Mucosa of descending colon (tissue), 3 donors: ENCODE measurements at regions of chr20 and their contacts with region 1.

Region 1: DNA sequence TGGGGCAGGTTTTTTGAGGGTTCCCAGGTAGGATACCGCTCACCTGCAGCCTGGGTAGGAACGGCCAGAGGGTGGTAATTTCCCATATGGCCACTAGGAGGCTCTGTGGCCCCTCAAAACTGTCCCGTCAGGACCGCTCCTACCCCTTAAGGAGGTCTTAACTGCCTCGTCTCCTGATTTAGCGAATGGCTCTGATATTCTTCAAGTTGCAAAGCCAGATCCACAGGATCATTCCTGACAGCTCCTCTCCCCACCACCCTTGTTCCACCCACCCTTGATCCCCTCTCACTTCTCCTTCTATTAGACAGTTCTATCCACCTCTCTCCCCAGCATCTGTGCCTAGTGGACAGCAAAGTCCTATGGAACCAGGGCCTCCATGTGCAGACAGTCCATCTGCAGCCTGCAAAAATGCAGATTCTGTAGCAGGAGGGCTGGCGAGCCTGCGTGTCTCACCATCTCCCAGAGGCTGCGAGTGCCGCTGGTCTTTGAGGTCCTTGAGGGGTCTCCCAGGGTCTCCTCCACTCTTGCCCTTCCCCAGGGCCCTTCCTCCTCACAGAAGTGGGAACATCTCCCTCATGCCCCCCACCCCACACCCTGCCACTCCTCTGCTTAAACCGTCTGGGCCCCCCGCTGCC is 34.3 kb upstream of the ZBP1 start:
- DNase-seq: peak in 2 of 3 donors; percentile 65 to 75
- ATAC-seq: peak; percentile 76
- H3K4me3 ChIP-seq: no peak overlapping the region
- H3K4me1 ChIP-seq: no peaks in the 10 kb centered on the region
- CTCF ChIP-seq: peak; percentile 86

Region 2: GRCh38 chr20:57282670-57283361 is 371.7 kb before region 1 on chr20:
- intact Hi-C with region 1: no loop called
- DNase-seq: no peak
- ATAC-seq: no peak
- H3K4me3 ChIP-seq: no peak overlapping the region
- H3K4me1 ChIP-seq: no peaks in the 10 kb centered on the region
- CTCF ChIP-seq: no peak

Region 3: DNA sequence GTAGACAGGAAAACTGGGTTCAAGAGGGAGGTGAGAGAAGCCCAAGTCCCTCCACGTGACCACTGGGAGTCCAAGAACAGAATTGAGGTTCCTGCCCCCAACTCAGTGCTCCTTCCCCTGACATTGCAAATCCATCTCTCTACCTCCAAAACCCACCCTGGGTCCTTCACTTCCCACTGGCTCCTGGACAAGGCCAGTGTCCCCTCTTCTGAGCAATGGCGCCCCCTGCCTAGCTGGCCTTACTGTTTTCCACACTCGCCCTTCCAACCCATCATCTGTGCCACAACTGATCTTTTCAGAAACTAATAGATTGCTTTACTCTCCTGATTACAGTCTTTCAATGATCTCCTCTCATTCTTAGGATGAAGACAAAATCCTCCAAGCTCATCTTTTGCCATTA is 373.6 kb after region 1 on chr20:
- intact Hi-C with region 1: loop called in 1 of 2 experiments (anchors 5 kb)
- DNase-seq: peak in 2 of 3 donors; percentile 66 to 67
- ATAC-seq: peak; percentile 40
- H3K4me3 ChIP-seq: no peak overlapping the region
- H3K4me1 ChIP-seq: no peaks in the 10 kb centered on the region
- CTCF ChIP-seq: no peak

Region 4: DNA sequence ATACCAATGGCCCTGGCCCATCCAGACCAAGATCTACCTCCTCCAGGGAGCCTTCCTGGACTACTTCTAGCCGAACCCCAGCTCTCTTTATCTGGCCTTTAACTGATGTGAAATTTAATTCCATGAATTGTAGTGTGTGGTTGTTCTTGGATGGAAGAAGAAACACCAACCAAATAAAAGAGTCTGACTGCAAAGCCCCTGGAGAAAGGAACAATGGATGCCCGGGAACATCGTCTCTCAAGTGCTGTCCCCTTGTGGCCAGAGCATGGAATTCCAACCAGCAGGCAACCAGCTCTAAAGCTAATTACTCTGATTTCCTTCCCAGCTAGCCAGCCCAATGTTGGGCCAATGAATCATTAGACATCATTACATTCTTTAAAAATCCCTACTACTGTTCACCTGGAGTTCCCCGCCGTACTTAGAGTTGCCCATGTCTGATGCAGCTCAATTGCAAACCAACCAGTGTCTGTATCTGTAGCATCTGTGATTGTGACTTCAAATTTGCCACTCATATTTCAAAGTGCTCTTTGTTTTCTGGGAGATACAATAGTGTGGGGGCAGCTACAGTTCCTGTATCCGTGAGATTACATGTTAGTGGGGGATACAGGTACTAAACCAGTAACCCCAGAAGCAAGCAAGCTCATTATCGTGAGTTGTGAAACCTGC is 432.8 kb after region 1 on chr20:
- intact Hi-C with region 1: loop called (anchors 5 kb)
- DNase-seq: peak in 2 of 3 donors; percentile 43 to 51
- ATAC-seq: peak; percentile 78
- H3K4me3 ChIP-seq: no peak overlapping the region
- H3K4me1 ChIP-seq: no peaks in the 10 kb centered on the region
- CTCF ChIP-seq: peak; percentile 70

Region 5: DNA sequence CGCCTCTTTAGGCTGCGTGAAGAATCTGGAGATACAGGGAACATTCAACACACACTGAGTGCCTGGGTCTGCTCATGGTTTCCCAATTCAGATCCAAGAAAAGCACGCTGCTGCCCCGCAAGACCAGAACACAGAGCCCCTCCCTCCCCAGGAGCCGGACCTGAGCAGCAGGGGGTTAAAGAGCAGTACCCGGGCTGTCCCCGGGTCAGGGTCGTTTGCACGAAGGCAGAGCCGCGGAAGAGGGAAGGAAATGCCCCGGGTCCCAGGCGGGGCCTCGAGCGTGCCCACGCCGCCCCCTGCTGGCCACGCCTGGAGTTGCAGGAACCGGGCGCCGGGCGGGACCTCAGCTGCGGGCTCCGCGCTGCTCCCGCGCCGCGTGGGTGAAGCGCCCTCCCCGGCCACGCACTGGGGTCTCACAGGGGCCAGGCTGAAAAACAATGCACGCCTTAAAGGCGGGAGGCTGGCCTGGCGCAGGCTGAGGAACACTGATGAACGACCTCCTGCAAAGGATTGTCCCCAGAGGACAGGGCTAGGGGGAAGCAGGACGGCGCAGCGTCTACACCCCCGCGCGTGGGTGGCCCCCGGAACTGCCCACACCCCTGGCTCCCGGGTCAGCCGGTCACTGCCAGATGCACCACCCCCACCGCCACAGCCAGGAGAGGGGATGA is 525.1 kb after region 1 on chr20:
- intact Hi-C with region 1: loop called (anchors 2 to 10 kb)
- DNase-seq: peak in 2 of 3 donors; percentile 72 to 79
- ATAC-seq: peak; percentile 93
- H3K4me3 ChIP-seq: no peak overlapping the region
- H3K4me1 ChIP-seq: peaks cover 9% of the 10 kb centered on the region
- CTCF ChIP-seq: peak; percentile 99